Left lung (tissue), 14 donors: ENCODE measurements at regions of chr4 and their contacts with region 1.

Region 1: DNA sequence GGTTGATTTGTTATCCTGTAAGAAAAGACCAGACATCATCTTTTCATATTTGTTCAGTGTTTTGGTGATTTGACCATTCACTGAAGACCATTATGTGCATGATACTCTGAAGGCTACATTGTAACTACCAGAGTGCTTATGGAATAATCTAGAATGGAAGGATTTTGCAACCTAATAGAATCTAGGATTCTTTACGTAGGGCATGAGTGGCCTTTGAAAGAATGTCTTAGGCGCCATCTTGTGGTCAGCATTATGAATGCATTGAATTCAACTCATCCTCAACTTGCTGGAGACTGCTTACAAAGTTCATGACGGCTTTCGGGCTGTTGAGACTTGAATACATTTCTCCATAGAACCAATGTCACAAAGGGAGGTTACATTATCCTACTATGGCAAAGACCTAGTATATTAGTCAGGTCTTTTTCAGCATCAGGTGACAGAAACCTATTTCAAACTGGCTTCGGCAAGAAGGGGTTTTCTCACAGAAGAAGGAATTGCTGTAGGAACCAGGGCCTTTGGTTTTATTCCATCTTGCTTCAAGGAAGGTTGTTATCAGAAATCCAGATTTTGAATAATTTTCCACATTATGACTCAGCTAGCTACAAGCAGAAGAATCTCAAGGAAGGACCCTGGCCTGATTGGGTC is 104.1 kb downstream of the GPAT3 start:
- DNase-seq: peak in 2 of 4 donors; percentile 75 to 86
- ATAC-seq: peak; percentile 90
- H3K4me3 ChIP-seq: no peak overlapping the region
- H3K27ac ChIP-seq: no peak overlapping the region
- H3K4me1 ChIP-seq: peaks cover 0 to 3% of the 10 kb centered on the region in 2 donors
- H3K27me3 ChIP-seq: peaks cover 0 to 18% of the 10 kb centered on the region in 2 donors
- CTCF ChIP-seq: peak; percentile 75 to 76

Region 2: GRCh38 chr4:83504986-83505385 is 135.0 kb before region 1 on chr4:
- intact Hi-C with region 1: loop called in 1 of 2 experiments (anchors 5 kb)
- DNase-seq: peak in 1 of 4 donors; percentile 40
- ATAC-seq: peak; percentile 43
- H3K4me3 ChIP-seq: no peak overlapping the region
- H3K27ac ChIP-seq: no peak overlapping the region
- H3K4me1 ChIP-seq: no peaks in the 10 kb centered on the region
- H3K27me3 ChIP-seq: no peaks in the 10 kb centered on the region
- CTCF ChIP-seq: no peak

Region 3: DNA sequence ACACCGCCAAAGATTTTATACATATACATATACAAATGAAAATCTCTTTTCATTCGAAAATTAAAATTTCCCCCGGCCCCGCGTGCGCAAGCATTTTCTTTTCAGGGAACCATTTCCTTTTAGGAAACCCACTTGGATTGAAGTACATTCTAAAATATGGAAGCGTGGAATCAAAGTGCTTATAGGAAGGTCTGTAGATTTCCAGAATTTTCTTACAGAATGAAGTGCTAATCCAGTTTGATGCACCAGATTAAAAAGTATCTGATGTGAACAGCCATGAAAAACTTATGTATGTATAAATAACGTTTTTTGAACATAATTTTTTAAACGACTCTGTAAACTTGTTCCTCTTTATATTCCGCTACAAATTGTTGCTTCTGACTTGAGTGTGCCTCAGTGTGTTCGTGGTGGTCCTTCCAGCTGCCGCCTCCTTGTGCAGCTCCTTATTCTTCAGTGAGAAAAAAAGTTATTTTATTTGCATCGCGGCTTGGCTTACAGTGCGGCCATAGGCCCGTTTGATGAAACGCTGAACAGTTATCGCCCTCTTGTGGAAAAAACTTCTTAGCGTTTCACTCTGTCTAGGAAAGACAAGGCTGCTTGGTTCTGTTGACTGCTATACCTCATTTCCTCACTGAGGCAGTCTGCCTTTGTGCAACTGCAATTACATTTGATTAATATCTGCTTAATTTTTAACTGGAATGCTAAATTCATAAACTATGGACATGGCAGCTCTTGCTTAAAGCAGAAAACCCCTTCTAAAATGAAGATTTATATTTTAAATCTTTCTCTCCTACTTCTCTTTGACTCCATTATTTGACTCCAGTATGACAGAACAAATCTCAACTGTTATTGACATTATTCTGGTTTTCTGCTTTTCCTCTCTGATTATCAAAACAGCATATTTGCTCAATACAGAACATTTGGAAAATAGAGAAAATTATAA is 863.8 kb after region 1 on chr4:
- intact Hi-C with region 1: loop called in 1 of 2 experiments (anchors 10 kb)
- DNase-seq: peak in 1 of 4 donors; percentile 84
- ATAC-seq: peak; percentile 88
- H3K4me3 ChIP-seq: no peak overlapping the region
- H3K27ac ChIP-seq: no peak overlapping the region
- H3K4me1 ChIP-seq: peaks cover 7 to 10% of the 10 kb centered on the region in 2 donors
- H3K27me3 ChIP-seq: peaks cover 84 to 100% of the 10 kb centered on the region in 2 donors
- CTCF ChIP-seq: peak; percentile 17 to 54